AG04449 (cell line): ENCODE measurements at regions of chr1 and their contacts with region 1.

Region 1: DNA sequence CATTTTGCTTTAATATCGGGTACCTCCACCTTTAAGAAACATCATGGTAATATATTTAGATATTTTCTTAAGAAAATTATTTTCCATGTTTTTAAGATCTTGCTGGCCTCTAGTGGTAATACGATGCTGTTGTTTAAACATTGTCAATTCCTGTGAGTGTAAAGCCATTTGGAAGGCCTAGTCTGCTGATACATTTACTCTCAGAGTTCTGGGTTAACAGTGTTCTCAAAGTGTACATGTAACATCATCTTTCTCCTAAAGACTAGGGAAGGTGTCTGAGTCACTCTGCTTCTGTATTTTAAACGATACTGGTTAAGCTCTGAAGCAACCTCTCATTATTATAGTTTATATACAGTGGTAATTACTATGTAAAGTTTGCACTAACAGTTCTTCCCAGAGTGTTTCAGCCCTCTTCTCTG is 189.1 kb downstream of the RASAL2 start:
- DNase-seq: peak; percentile 24
- H3K4me3 ChIP-seq: no peak overlapping the region
- CTCF ChIP-seq: peak; percentile 35

Region 2: DNA sequence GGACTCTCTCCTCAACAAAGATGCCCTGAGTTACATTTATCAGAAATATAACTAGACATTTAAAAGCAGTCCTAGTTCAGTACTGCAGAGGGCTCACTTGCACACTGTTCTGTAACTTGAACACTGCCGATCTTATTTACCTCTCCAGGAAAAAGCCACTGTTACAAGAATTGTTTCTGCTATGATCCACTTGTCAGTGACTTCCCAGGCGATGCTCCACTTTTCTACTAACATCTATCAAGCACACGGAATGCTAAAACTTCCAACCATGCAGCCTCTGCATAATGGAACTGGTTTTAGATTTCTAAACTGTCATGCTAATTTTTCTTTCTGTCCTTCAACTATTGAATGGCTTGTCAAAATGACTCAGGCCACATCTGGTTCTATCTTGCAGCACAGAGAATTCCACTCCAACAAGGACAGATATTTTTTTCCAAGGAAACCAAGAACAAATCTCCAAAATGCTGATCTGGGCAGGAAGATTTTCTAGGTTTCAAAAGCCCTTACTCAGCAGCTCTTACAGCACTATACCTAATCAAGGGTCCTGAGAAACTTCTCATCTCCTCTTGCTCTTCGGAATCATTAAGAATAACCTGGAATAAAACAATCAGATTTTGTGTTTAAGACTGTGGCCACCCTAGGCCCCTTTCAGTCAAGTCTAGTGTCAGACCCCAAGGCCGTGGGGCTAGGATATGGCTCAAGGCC is 323.0 kb before region 1 on chr1:
- CTCF ChIA-PET with region 1: interaction called, 23 read pairs
- POLR2A ChIA-PET with region 1: no interaction called
- DNase-seq: no peak
- H3K4me3 ChIP-seq: no peak overlapping the region
- CTCF ChIP-seq: peak; percentile 43

Region 3: GRCh38 chr1:178263341-178263740 is 19.6 kb before region 1 on chr1:
- CTCF ChIA-PET with region 1: no interaction called
- POLR2A ChIA-PET with region 1: no interaction called
- DNase-seq: no peak
- H3K4me3 ChIP-seq: no peak overlapping the region
- CTCF ChIP-seq: no peak

Region 4: GRCh38 chr1:178294654-178295053 is 11.7 kb after region 1 on chr1:
- CTCF ChIA-PET with region 1: interaction called, 19 read pairs
- POLR2A ChIA-PET with region 1: no interaction called
- DNase-seq: no peak
- H3K4me3 ChIP-seq: no peak overlapping the region
- CTCF ChIP-seq: no peak